T-cell (primary cell): ENCODE measurements at regions of chrX and their contacts with region 1.

Region 1: DNA sequence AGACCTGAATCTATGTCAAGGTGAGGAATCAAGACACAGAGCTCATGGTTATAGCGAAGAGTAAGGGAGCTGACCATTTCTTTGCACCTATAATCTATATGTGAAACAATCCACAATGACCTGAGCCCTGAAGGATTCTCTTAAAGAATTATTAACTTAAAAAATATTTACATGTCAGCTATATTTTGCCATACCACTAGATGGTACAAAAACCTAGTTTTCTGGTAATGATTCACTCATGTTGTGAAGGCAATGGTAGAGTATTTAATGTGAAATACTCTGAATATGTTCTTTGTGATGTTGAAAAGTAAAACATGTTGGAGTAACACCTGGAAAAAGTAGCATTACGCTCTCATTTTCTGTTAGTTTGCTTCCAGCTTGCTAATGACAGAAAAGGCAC is 40.0 kb downstream of the VGLL1 start:
- DNase-seq: peak in 1 of 35 experiments; percentile 25
- ATAC-seq: peak in 2 of 4 experiments; percentile 26 to 41
- H3K4me3 ChIP-seq: no peak overlapping the region
- H3K4me3 Mint-ChIP-seq: no peak overlapping the region
- H3K27ac ChIP-seq: no peak overlapping the region
- H3K27ac Mint-ChIP-seq: peak overlapping the region in 1 of 2 donors; percentile 70
- H3K4me1 ChIP-seq: peaks cover 2 to 3% of the 10 kb centered on the region in 2 experiments
- H3K4me1 Mint-ChIP-seq: peaks cover 10% of the 10 kb centered on the region in 3 donors
- H3K27me3 ChIP-seq: no peaks in the 10 kb centered on the region
- H3K27me3 Mint-ChIP-seq: peaks cover 0 to 6% of the 10 kb centered on the region in 2 donors

Region 2: GRCh38 chrX:136496770-136497598 is 75.0 kb before region 1 on chrX and contains the start of gene HTATSF1:
- CTCF ChIA-PET with region 1: interaction called in 1 of 2 experiments, 4 read pairs
- POLR2A ChIA-PET with region 1: interaction called in 1 of 2 experiments, 15 read pairs
- DNase-seq: peak; percentile 68 to 91 (median 86)
- ATAC-seq: peak; percentile 80 to 85 (median 82)
- H3K4me3 ChIP-seq: peak within 1 kb of the TSS; percentile 83 to 84
- H3K4me3 Mint-ChIP-seq: peak within 1 kb of the TSS; percentile 86 to 93 (median 88)
- H3K27ac ChIP-seq: peak within 1 kb of the TSS; percentile 91
- H3K27ac Mint-ChIP-seq: peak within 1 kb of the TSS; percentile 95 to 96
- H3K4me1 ChIP-seq: peaks cover 2 to 5% of the 10 kb centered on the region in 2 experiments
- H3K4me1 Mint-ChIP-seq: peaks cover 13 to 20% (median 17%) of the 10 kb centered on the region in 3 donors
- H3K27me3 ChIP-seq: peaks cover 0 to 1% of the 10 kb centered on the region in 2 experiments
- H3K27me3 Mint-ChIP-seq: peaks cover under 1 to 14% of the 10 kb centered on the region in 2 donors
- total RNA-seq, gene HTATSF1: 27.2 to 32.2 (median 28.8) TPM